ENCODE measurements at regions of chr2 and their contacts with region 1.

Region 1: DNA sequence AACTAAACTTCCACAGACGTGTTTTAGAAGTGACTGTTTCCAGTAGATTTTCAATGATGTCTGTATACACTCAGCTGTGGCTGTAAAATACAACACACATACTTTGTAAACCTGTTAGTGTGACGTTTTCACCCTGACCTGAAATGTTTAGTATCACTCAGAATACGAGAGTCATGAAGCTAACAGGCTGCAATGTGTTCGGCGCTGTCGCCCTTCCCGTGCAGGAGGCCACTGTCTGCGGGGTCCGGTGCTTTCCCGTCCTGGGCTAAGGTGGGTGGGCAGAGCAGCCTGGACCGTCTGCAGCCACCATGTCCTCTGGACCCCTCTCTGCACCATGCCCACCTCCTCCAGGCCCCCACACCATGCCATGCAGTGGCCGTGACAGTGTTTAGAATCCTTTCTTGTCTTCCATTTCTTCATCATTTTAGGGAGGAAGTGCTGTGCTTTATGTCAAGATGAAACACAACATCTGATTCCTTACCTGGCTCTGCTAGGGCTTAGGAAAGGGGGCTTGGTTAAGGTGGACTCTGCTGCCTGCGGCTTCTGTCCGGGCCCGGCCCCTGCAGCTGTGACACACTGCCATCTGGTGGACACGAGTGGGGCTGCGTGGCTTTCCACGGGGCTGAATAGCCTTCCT is 53.8 kb upstream of the RBM44 start:
- DNase-seq: peak; percentile 80
- ATAC-seq: peak; percentile 86
- H3K4me3 ChIP-seq: no peak overlapping the region
- H3K4me3 Mint-ChIP-seq: no peak overlapping the region
- H3K27ac ChIP-seq: peak overlapping the region in 1 of 2 donors; percentile 29
- H3K27ac Mint-ChIP-seq: peak overlapping the region; percentile 80
- H3K4me1 ChIP-seq: peaks cover 0 to 2% of the 10 kb centered on the region in 2 donors
- H3K4me1 Mint-ChIP-seq: peaks cover 40% of the 10 kb centered on the region
- H3K27me3 ChIP-seq: no peaks in the 10 kb centered on the region
- H3K27me3 Mint-ChIP-seq: no peaks in the 10 kb centered on the region
- CTCF ChIP-seq: peak; percentile 93

Region 2: DNA sequence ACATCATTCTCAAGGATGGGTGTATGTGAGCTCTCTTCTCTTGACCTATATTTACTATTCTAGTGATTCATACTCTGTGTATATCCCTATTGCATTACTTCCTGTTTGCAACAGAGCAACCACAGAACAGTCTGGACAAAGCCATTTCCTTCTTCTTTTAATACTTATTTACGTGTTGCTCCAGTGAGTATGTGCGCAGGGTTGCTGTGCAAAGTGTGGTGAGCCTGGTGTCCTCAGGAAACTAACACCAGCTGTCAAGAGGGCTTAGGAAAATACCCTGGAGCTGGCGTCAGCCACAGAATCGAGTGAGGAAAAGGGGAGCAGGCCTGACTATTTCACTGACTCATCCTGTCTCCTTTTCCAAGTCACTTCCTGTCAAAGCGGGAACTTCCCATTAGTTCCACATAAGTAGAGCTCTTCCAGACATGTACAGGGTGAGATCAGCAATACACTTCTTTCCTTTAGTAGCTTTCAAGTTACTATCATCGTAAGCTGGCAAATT is 873.2 kb before region 1 on chr2:
- CTCF ChIA-PET with region 1: no interaction called
- POLR2A ChIA-PET with region 1: no interaction called
- intact Hi-C with region 1: no loop called
- DNase-seq: no peak
- ATAC-seq: no peak
- H3K4me3 ChIP-seq: no peak overlapping the region
- H3K4me3 Mint-ChIP-seq: no peak overlapping the region
- H3K27ac ChIP-seq: no peak overlapping the region
- H3K27ac Mint-ChIP-seq: no peak overlapping the region
- H3K4me1 ChIP-seq: no peaks in the 10 kb centered on the region
- H3K4me1 Mint-ChIP-seq: peaks cover 5% of the 10 kb centered on the region
- H3K27me3 ChIP-seq: peaks cover 0 to 2% (median 0%) of the 10 kb centered on the region in 4 experiments
- H3K27me3 Mint-ChIP-seq: peaks cover 7% of the 10 kb centered on the region
- CTCF ChIP-seq: no peak

Region 3: DNA sequence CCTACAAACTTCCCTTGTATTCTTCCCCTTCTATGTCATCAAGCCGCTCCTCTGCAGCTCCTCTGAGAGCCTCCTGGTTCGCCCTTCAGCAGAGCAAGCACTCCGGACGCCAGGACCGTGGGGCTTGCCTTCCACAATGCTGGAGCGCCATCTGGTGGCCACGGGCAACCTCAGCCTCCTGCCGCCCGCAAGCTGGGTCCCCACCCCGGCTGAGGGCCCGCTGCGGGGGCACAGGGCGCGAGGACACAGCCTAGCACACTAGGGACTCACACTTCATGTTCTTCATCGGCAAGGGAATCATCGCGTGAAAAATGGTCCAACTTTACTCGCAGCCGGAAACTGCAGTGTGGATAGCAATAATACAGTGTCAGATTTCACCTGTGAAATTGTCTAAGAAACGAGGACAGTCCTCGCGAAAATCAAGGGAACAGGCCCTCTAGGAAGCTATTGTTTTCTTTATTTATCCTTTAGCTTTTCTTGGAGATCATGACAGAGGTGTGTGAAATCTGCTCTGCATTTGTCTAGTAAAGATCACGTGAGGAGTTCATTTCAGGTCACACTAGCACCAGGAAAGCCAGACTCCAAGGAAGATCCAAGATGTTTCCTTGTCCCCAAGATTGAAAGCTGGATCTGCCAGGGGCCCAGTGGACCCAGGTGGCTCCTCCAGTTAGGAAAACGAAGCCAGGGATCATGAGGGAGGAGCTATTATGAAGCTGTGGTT is 172.6 kb before region 1 on chr2:
- CTCF ChIA-PET with region 1: interaction called, 37 read pairs
- POLR2A ChIA-PET with region 1: no interaction called
- intact Hi-C with region 1: loop called (anchors 2 kb)
- DNase-seq: peak; percentile 87
- ATAC-seq: peak; percentile 93
- H3K4me3 ChIP-seq: no peak overlapping the region
- H3K4me3 Mint-ChIP-seq: no peak overlapping the region
- H3K27ac ChIP-seq: no peak overlapping the region
- H3K27ac Mint-ChIP-seq: no peak overlapping the region
- H3K4me1 ChIP-seq: peaks cover 0 to 7% of the 10 kb centered on the region in 2 donors
- H3K4me1 Mint-ChIP-seq: peaks cover 6% of the 10 kb centered on the region
- H3K27me3 ChIP-seq: peaks cover 0 to 14% (median 2%) of the 10 kb centered on the region in 4 experiments
- H3K27me3 Mint-ChIP-seq: peaks cover 36% of the 10 kb centered on the region
- CTCF ChIP-seq: peak; percentile 98

Region 4: GRCh38 chr2:237603718-237604362 is 140.9 kb before region 1 on chr2:
- CTCF ChIA-PET with region 1: interaction called, 14 read pairs
- POLR2A ChIA-PET with region 1: no interaction called
- intact Hi-C with region 1: no loop called
- DNase-seq: peak; percentile 87
- ATAC-seq: peak; percentile 96
- H3K4me3 ChIP-seq: peak overlapping the region in 4 of 5 experiments; percentile 20 to 41 (median 39)
- H3K4me3 Mint-ChIP-seq: peak overlapping the region; percentile 81
- H3K27ac ChIP-seq: peak overlapping the region; percentile 75 to 90
- H3K27ac Mint-ChIP-seq: peak overlapping the region; percentile 90
- H3K4me1 ChIP-seq: peaks cover 19 to 21% of the 10 kb centered on the region in 2 donors
- H3K4me1 Mint-ChIP-seq: peaks cover 26% of the 10 kb centered on the region
- H3K27me3 ChIP-seq: no peaks in the 10 kb centered on the region
- H3K27me3 Mint-ChIP-seq: no peaks in the 10 kb centered on the region
- CTCF ChIP-seq: no peak

Region 5: GRCh38 chr2:237691908-237692600 is 52.7 kb before region 1 on chr2:
- CTCF ChIA-PET with region 1: interaction called, 41 read pairs
- POLR2A ChIA-PET with region 1: no interaction called
- intact Hi-C with region 1: loop called (anchors 2 kb)
- DNase-seq: peak; percentile 94
- ATAC-seq: peak; percentile 66
- H3K4me3 ChIP-seq: peak overlapping the region; percentile 87 to 94 (median 92)
- H3K4me3 Mint-ChIP-seq: peak overlapping the region; percentile 91
- H3K27ac ChIP-seq: peak overlapping the region; percentile 94 to 95
- H3K27ac Mint-ChIP-seq: peak overlapping the region; percentile 87
- H3K4me1 ChIP-seq: peaks cover 70 to 79% of the 10 kb centered on the region in 2 donors
- H3K4me1 Mint-ChIP-seq: peaks cover 78% of the 10 kb centered on the region
- H3K27me3 ChIP-seq: no peaks in the 10 kb centered on the region
- H3K27me3 Mint-ChIP-seq: no peaks in the 10 kb centered on the region
- CTCF ChIP-seq: no peak

Region 6: DNA sequence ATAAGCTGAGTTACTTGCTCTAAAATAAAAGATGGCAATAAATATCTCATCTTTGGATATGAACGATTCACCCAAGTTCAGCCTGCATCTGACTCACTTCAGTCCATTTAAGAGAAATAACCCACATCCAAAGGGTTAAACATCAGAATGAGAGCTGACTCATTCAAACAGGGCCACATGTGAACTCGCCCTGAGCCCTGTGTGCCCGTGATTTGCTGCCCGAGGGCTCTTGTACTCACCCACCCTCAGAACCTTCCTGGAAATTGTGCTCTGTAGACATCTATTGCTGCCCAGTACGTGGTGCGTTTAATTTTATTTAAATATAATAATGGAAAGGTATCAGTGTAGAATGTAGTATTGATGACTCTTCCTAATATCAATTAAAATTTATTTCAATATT is 13.1 kb before region 1 on chr2:
- CTCF ChIA-PET with region 1: interaction called, 11 read pairs
- POLR2A ChIA-PET with region 1: no interaction called
- intact Hi-C with region 1: no loop called
- DNase-seq: no peak
- ATAC-seq: no peak
- H3K4me3 ChIP-seq: no peak overlapping the region
- H3K4me3 Mint-ChIP-seq: no peak overlapping the region
- H3K27ac ChIP-seq: no peak overlapping the region
- H3K27ac Mint-ChIP-seq: peak overlapping the region; percentile 26
- H3K4me1 ChIP-seq: peaks cover 3 to 8% of the 10 kb centered on the region in 2 donors
- H3K4me1 Mint-ChIP-seq: peaks cover 34% of the 10 kb centered on the region
- H3K27me3 ChIP-seq: no peaks in the 10 kb centered on the region
- H3K27me3 Mint-ChIP-seq: no peaks in the 10 kb centered on the region
- CTCF ChIP-seq: no peak

Region 7: DNA sequence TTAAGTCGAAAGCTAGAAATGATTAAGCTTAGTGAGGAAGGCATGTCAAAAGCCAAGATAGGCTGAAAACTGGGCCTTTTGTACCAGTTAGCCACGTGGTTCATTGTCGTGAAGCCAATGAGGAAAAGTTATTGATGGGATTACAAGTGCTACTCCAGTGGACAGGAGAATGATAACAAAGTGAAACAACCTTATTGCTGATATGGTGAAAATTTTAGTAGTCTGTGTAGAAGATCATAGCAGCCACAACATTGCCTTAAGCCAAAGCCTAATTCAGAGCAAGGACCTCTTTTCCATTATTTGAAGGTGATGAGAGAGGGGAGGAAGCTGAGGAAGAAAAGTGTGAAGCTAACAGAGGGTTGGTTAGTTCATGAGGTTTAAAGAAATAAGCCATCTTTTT is 90.6 kb after region 1 on chr2:
- CTCF ChIA-PET with region 1: no interaction called
- POLR2A ChIA-PET with region 1: no interaction called
- intact Hi-C with region 1: no loop called
- DNase-seq: no peak
- ATAC-seq: no peak
- H3K4me3 ChIP-seq: no peak overlapping the region
- H3K4me3 Mint-ChIP-seq: no peak overlapping the region
- H3K27ac ChIP-seq: no peak overlapping the region
- H3K27ac Mint-ChIP-seq: no peak overlapping the region
- H3K4me1 ChIP-seq: no peaks in the 10 kb centered on the region
- H3K4me1 Mint-ChIP-seq: no peaks in the 10 kb centered on the region
- H3K27me3 ChIP-seq: no peaks in the 10 kb centered on the region
- H3K27me3 Mint-ChIP-seq: no peaks in the 10 kb centered on the region
- CTCF ChIP-seq: no peak

Region 8: DNA sequence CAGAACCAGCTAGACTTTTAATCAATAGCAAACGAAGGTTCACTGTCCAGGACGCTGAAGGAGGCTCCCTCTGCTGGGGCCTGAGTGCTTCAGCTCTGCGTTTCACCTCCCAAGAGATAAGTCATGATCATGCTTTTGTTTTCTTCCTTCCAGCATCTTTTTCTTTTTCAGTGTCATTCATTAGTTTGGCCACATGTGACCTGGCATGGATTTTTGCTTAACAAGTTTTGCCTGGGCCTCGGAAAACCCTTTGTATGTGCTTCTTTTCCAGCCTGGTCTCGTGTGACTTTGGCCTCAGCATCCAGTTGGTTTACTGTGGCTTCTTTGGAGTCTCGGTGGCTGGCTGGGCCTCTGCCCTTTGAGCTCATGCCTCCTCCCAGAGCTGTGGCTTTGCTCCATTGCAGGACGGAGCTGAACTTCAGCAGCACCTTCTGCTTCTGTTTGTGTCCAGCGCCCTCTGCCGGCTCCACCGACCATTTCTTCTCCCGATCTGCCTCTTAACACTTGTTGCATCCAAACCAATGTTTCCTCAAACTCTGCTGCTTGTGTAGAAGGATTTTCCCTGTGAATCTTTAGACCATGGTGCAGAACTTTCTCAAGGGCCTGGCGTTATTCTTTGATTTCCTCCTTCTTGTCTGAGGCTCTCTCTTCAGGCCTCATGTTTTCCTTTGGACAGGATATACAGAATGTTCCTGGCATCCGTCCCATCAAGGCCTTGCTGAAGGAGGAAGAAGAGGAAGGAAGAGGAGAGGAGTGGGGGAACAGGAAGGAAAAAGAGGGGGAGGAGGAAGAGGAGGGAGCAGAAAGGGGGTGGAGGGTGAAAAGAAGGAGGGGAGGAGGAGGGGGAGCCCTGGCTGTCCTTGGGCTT is 518.7 kb after region 1 on chr2:
- CTCF ChIA-PET with region 1: interaction called, 15 read pairs
- POLR2A ChIA-PET with region 1: no interaction called
- intact Hi-C with region 1: no loop called
- DNase-seq: peak; percentile 78
- ATAC-seq: peak; percentile 66
- H3K4me3 ChIP-seq: no peak overlapping the region
- H3K4me3 Mint-ChIP-seq: no peak overlapping the region
- H3K27ac ChIP-seq: no peak overlapping the region
- H3K27ac Mint-ChIP-seq: no peak overlapping the region
- H3K4me1 ChIP-seq: peaks cover 0 to 4% of the 10 kb centered on the region in 2 donors
- H3K4me1 Mint-ChIP-seq: peaks cover 1% of the 10 kb centered on the region
- H3K27me3 ChIP-seq: no peaks in the 10 kb centered on the region
- H3K27me3 Mint-ChIP-seq: no peaks in the 10 kb centered on the region
- CTCF ChIP-seq: peak; percentile 84